Body of pancreas (tissue), 4 donors: ENCODE measurements at regions of chr10 and their contacts with region 1.

Region 1: DNA sequence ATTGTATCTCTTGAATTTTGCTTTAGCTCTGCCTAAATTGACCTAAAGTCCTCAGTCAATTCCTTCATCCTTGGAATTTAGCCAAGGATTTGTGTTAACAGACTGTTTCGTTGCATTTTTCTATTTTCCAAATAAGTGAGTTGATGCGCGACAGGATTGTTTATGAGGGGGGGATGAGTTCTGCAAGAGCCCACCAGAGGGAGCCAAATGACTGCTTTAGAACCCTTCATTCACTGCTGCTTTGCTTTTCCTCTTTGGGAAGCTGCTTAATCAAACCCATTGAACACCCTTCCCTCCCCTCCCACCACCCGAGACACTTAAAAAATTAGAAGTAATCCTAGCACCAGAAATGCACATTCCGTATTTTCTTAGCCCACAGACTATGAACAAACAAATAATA is 33.7 kb upstream of the PTF1A start:
- DNase-seq: peak; percentile 69 to 83 (median 73)
- ATAC-seq: peak; percentile 85
- H3K4me3 ChIP-seq: no peak overlapping the region
- H3K27ac ChIP-seq: peak overlapping the region in 1 of 4 donors; percentile 20
- H3K4me1 ChIP-seq: peaks cover 36% of the 10 kb centered on the region
- H3K27me3 ChIP-seq: no peaks in the 10 kb centered on the region
- CTCF ChIP-seq: peak; percentile 68 to 88 (median 87)
- POLR2A ChIP-seq: no peak

Region 2: GRCh38 chr10:22805283-22805682 is 353.1 kb before region 1 on chr10:
- intact Hi-C with region 1: no loop called
- DNase-seq: peak in 3 of 4 donors; percentile 5 to 31 (median 21)
- ATAC-seq: no peak
- H3K4me3 ChIP-seq: no peak overlapping the region
- H3K27ac ChIP-seq: no peak overlapping the region
- H3K4me1 ChIP-seq: peaks cover 5% of the 10 kb centered on the region
- H3K27me3 ChIP-seq: no peaks in the 10 kb centered on the region
- CTCF ChIP-seq: peak in 1 of 7 experiments; percentile 19
- POLR2A ChIP-seq: no peak

Region 3: DNA sequence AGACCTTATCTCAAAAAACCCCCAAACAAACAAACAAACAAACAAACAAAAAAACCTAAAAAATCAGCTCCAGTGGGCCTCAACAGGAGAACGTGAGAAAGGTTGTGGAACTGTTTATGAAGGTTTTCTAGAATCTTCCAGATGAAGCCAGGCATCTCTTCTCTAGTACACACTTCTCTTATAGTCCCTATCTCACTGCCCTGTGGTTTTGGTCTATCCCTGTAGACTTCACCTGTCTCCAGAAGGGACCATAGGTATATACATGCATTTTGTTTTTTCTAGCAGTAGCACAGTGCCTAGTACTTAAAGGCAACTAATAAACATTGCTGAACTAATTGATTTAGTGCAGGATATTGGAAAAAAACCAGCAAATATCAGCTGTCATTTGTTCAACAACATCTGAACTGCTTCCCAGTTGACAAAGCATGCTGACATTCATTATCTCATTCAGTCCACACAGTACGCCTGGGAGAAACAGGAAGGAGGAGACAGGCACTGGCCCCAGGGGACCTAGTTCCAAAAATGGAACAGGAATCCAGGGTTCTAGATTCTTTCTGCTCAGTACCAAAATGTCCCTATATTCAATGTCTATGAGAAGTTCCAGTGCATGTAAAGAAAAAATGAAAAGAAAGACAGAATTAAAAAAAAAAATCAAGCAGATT is 126.4 kb after region 1 on chr10:
- intact Hi-C with region 1: loop called (anchors 5 kb)
- DNase-seq: no peak
- ATAC-seq: no peak
- H3K4me3 ChIP-seq: no peak overlapping the region
- H3K27ac ChIP-seq: peak overlapping the region in 3 of 4 donors; percentile 23 to 51 (median 34)
- H3K4me1 ChIP-seq: peaks cover 11% of the 10 kb centered on the region
- H3K27me3 ChIP-seq: no peaks in the 10 kb centered on the region
- CTCF ChIP-seq: no peak
- POLR2A ChIP-seq: no peak

Region 4: DNA sequence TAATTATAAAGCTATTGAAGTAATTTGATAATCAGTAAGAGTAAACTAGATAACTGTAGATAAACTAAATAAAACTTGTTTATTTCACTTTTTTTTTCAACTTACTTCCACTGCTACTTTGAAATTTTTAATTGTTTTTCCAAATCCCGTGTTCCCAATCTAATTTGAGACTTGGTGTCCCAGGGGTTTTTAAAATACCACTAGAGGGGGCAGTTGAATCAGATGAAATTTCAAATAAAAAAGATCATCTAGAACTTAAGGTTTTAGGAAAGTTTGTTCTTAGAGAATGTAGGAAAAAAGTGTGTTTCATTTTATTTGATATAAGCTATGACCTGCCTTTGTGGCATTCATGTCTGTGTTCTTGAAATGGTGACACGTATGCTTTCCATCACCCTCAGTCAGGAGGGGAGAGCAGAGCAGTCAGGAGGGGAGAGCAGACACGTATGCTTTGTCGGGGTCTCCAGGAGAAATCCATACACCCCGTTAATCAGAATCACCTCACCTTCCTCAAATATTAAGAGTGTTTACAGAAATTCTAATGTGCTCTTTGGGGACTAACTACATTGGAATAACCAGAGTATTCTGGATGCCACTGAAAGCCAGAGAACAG is 136.4 kb after region 1 on chr10:
- intact Hi-C with region 1: loop called (anchors 5 kb)
- DNase-seq: no peak
- ATAC-seq: no peak
- H3K4me3 ChIP-seq: no peak overlapping the region
- H3K27ac ChIP-seq: no peak overlapping the region
- H3K4me1 ChIP-seq: peaks cover 12% of the 10 kb centered on the region
- H3K27me3 ChIP-seq: no peaks in the 10 kb centered on the region
- CTCF ChIP-seq: peak in 6 of 7 experiments; percentile 29 to 50 (median 40)
- POLR2A ChIP-seq: no peak